ENCODE measurements at regions of chr2 and their contacts with region 1.

Region 1: GRCh38 chr2:159620796-159621195 is 4.4 kb upstream of the BAZ2B start:
- DNase-seq: no peak
- H3K4me3 ChIP-seq: no peak overlapping the region
- H3K27ac ChIP-seq: no peak overlapping the region
- H3K4me1 ChIP-seq: peaks cover 0 to 22% of the 10 kb centered on the region in 2 donors
- H3K27me3 ChIP-seq: no peaks in the 10 kb centered on the region
- CTCF ChIP-seq: no peak
- POLR2A ChIP-seq: no peak

Region 2: GRCh38 chr2:159695795-159696448 is 75.1 kb after region 1 on chr2:
- intact Hi-C with region 1: loop called in 1 of 2 experiments (anchors 10 kb)
- DNase-seq: no peak
- H3K4me3 ChIP-seq: no peak overlapping the region
- H3K27ac ChIP-seq: no peak overlapping the region
- H3K4me1 ChIP-seq: no peaks in the 10 kb centered on the region
- H3K27me3 ChIP-seq: no peaks in the 10 kb centered on the region
- CTCF ChIP-seq: no peak
- POLR2A ChIP-seq: no peak

Region 3: DNA sequence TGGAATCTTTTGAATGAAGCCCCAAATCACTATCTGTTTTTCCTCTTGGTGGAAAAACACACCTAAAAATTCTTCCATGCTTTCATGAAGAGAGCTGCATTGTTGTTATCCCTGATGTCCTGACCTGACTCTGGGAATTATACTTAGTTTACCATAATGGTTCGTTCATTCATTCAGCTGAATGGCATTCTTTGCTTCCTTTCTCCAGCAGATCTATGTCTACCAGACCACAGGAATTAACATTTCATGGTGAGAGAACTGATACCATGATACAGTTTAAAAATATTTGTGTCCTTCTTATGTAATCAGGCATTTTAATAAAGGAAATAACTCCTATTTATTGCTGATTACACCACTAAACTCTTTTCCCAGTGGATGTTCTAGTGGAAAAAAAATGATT is 1992.4 kb after region 1 on chr2:
- intact Hi-C with region 1: no loop called
- DNase-seq: no peak
- H3K4me3 ChIP-seq: no peak overlapping the region
- H3K27ac ChIP-seq: no peak overlapping the region
- H3K4me1 ChIP-seq: no peaks in the 10 kb centered on the region
- H3K27me3 ChIP-seq: no peaks in the 10 kb centered on the region
- CTCF ChIP-seq: no peak
- POLR2A ChIP-seq: no peak

Measured in adrenal gland (tissue), 19 donors.